ENCODE measurements at regions of chr7 and their contacts with region 1.

Region 1: DNA sequence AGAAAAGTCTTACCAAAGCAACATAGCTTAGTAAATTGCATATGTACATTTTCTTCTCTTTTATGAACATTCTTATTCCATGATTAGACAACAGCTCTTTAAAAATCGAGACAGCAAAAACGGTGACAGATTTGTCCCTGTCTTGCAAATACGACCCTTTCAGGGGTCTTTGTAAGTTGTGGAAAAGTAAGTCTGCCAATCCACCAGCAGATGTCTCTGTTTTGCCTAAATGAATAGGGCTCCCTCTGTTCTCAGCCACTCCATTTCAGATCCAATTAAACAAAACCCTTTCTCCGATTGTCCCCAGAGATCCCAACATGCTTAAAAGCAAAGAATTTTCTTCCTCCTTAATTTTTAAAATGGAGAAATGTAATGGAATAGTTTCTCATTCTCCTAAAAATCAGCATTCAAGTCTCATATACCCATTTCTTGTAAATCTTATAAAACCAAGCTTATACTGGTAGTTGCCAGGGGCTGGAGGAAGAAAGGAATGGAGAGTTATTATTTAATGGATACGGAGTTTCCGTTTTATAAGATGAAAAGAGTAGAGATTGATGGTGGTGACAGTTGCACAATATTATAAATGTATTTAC is 61.0 kb upstream of the NFE2L3 start:
- DNase-seq: no peak
- ATAC-seq: peak; percentile 71
- H3K4me3 Mint-ChIP-seq: no peak overlapping the region
- H3K27ac Mint-ChIP-seq: peak overlapping the region; percentile 1
- H3K4me1 Mint-ChIP-seq: peaks cover 20% of the 10 kb centered on the region
- H3K27me3 Mint-ChIP-seq: no peaks in the 10 kb centered on the region

Region 2: GRCh38 chr7:25928549-25929330 is 162.3 kb before region 1 on chr7:
- CTCF ChIA-PET with region 1: no interaction called
- POLR2A ChIA-PET with region 1: no interaction called
- intact Hi-C with region 1: no loop called
- DNase-seq: no peak
- ATAC-seq: no peak
- H3K4me3 Mint-ChIP-seq: no peak overlapping the region
- H3K27ac Mint-ChIP-seq: no peak overlapping the region
- H3K4me1 Mint-ChIP-seq: no peaks in the 10 kb centered on the region
- H3K27me3 Mint-ChIP-seq: peaks cover 31% of the 10 kb centered on the region

Region 3: GRCh38 chr7:26078437-26079336 is 12.3 kb before region 1 on chr7:
- CTCF ChIA-PET with region 1: interaction called, 14 read pairs
- POLR2A ChIA-PET with region 1: no interaction called
- intact Hi-C with region 1: no loop called
- DNase-seq: peak; percentile 90
- ATAC-seq: peak; percentile 99
- H3K4me3 Mint-ChIP-seq: no peak overlapping the region
- H3K27ac Mint-ChIP-seq: no peak overlapping the region
- H3K4me1 Mint-ChIP-seq: peaks cover 3% of the 10 kb centered on the region
- H3K27me3 Mint-ChIP-seq: peaks cover 13% of the 10 kb centered on the region

Region 4: GRCh38 chr7:26101361-26102151 is 10.5 kb after region 1 on chr7:
- CTCF ChIA-PET with region 1: interaction called, 36 read pairs
- POLR2A ChIA-PET with region 1: no interaction called
- intact Hi-C with region 1: no loop called
- DNase-seq: peak; percentile 31
- ATAC-seq: peak; percentile 4
- H3K4me3 Mint-ChIP-seq: peak overlapping the region; percentile 64
- H3K27ac Mint-ChIP-seq: peak overlapping the region; percentile 88
- H3K4me1 Mint-ChIP-seq: peaks cover 47% of the 10 kb centered on the region
- H3K27me3 Mint-ChIP-seq: no peaks in the 10 kb centered on the region

Region 5: GRCh38 chr7:26187380-26188205 is 96.6 kb after region 1 on chr7:
- CTCF ChIA-PET with region 1: interaction called, 30 read pairs
- POLR2A ChIA-PET with region 1: interaction called, 19 read pairs
- intact Hi-C with region 1: loop called (anchors 2 kb)
- DNase-seq: no peak
- ATAC-seq: peak; percentile 21
- H3K4me3 Mint-ChIP-seq: peak overlapping the region; percentile 14
- H3K27ac Mint-ChIP-seq: peak overlapping the region; percentile 77
- H3K4me1 Mint-ChIP-seq: peaks cover 68% of the 10 kb centered on the region
- H3K27me3 Mint-ChIP-seq: no peaks in the 10 kb centered on the region

Region 6: GRCh38 chr7:26193432-26194207 is 102.6 kb after region 1 on chr7:
- CTCF ChIA-PET with region 1: interaction called, 30 read pairs
- POLR2A ChIA-PET with region 1: interaction called, 19 read pairs
- intact Hi-C with region 1: loop called (anchors 1 to 2 kb)
- DNase-seq: no peak
- ATAC-seq: no peak
- H3K4me3 Mint-ChIP-seq: peak overlapping the region; percentile 100
- H3K27ac Mint-ChIP-seq: peak overlapping the region; percentile 88
- H3K4me1 Mint-ChIP-seq: peaks cover 76% of the 10 kb centered on the region
- H3K27me3 Mint-ChIP-seq: no peaks in the 10 kb centered on the region

Region 7: DNA sequence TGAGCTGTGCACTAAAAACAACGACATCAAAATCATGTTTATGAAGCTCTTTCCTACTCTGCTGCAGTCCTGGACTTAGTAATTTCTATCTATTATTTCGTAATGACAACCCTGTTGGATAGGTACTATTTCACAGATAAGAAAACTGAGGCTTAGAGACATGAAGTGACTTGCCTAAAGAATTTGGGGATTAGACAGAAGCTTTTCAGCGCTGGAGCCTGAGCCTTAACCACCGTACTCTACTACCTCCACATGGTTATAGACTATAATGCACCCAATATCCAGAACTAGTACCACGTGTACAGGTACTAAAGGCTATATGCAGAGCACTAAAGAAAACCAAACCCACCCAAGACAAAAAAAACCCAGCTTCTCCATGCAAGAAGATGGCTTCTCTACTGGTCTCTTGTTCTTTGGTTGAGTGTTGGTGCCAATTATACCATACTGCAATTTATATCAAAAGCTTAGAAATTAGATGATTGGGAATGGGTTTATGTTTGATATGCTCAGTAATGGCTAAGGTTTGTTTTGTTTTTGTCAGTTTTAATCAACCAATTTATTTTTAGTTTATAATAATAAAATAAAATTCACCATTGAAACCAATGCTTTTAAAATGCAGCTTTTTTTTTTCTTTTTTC is 194.1 kb after region 1 on chr7:
- CTCF ChIA-PET with region 1: interaction called, 26 read pairs
- POLR2A ChIA-PET with region 1: no interaction called
- intact Hi-C with region 1: loop called (anchors 1 kb)
- DNase-seq: peak; percentile 33
- ATAC-seq: peak; percentile 94
- H3K4me3 Mint-ChIP-seq: no peak overlapping the region
- H3K27ac Mint-ChIP-seq: no peak overlapping the region
- H3K4me1 Mint-ChIP-seq: peaks cover 4% of the 10 kb centered on the region
- H3K27me3 Mint-ChIP-seq: no peaks in the 10 kb centered on the region

Region 8: GRCh38 chr7:26667500-26668133 is 576.6 kb after region 1 on chr7:
- CTCF ChIA-PET with region 1: interaction called, 3 read pairs
- POLR2A ChIA-PET with region 1: no interaction called
- intact Hi-C with region 1: loop called in 1 of 2 experiments (anchors 2 kb)
- DNase-seq: peak; percentile 68
- ATAC-seq: peak; percentile 61
- H3K4me3 Mint-ChIP-seq: no peak overlapping the region
- H3K27ac Mint-ChIP-seq: no peak overlapping the region
- H3K4me1 Mint-ChIP-seq: peaks cover 15% of the 10 kb centered on the region
- H3K27me3 Mint-ChIP-seq: peaks cover 11% of the 10 kb centered on the region

Measured in activated CD4-positive, alpha-beta T cell treated with anti-CD3 and anti-CD28 coated beads for 36 hours (primary cell).